IMR-90 (cell line): ENCODE measurements at regions of chr20 and their contacts with region 1.

Region 1: DNA sequence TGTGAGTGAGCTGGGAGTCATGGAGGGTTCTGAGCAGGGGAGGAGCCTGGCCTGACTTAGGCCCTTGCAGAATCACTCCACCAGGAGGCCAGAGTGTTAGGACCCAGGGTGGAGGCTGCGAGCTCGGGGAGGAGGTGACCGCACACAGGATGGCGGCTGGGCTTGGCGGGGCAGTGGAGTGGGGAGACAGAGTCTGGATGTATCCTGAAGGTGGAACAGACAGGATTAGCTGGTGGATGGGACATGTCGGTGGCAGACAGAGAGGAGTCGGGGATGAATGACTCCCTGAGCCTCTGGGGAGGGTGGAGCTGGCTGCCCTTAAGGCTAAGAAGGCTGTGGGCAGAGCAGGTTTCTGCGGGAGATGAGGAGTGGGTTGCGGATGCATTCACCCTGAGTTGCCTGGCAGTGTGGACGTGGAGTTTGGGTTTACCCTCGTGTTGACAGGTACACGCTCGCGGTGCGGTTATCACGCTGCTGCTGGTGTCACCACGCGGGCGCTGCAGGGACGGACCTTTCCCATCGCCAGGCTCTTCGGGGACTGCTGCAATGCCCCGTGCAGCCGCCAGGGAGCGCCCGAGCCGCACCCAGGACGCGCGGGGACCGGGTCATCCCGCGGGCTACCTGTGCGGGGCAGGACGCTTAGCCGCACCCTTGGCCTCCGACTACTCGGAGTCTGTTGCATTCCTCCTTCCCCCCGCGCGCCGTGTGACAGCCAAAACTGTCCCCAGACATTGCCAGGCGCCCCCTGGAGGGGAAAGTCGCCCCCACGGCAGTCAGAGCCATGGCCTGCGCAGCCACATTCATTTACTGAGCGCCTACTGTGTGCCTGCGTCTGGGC is 43.0 kb upstream of the PTGIS start:
- DNase-seq: no peak
- ATAC-seq: peak; percentile 92
- H3K4me3 ChIP-seq: no peak overlapping the region
- H3K27ac ChIP-seq: no peak overlapping the region
- H3K4me1 ChIP-seq: peaks cover 4% of the 10 kb centered on the region; the same call in 1 of the 2 replicates
- H3K27me3 ChIP-seq: peaks cover 6% of the 10 kb centered on the region; the same call in 1 of the 2 replicates
- CTCF ChIP-seq: peak; percentile 98
- POLR2A ChIP-seq: 0 out of 2 replicates have a peak, but pooled peaks have one; percentile 21
- RAD21 ChIP-seq: peak; percentile 95

Region 2: GRCh38 chr20:49330544-49331239 is 280.2 kb before region 1 on chr20:
- CTCF ChIA-PET with region 1: no interaction called
- POLR2A ChIA-PET with region 1: no interaction called
- dilution Hi-C with region 1: no loop called
- in situ Hi-C with region 1: loop called (anchors 5 kb)
- intact Hi-C with region 1: loop called (anchors 1 kb)
- DNase-seq: no peak
- ATAC-seq: no peak
- H3K4me3 ChIP-seq: no peak overlapping the region
- H3K27ac ChIP-seq: no peak overlapping the region
- H3K4me1 ChIP-seq: peaks cover 2% of the 10 kb centered on the region; the same call in 1 of the 2 replicates
- H3K27me3 ChIP-seq: peaks cover 52% of the 10 kb centered on the region
- CTCF ChIP-seq: no peak
- POLR2A ChIP-seq: no peak
- RAD21 ChIP-seq: no peak

Region 3: GRCh38 chr20:49541733-49542513 is 69.0 kb before region 1 on chr20:
- CTCF ChIA-PET with region 1: interaction called, 24 read pairs
- POLR2A ChIA-PET with region 1: no interaction called
- dilution Hi-C with region 1: no loop called
- in situ Hi-C with region 1: loop called (anchors 5 kb)
- intact Hi-C with region 1: loop called (anchors 1 kb)
- DNase-seq: peak; percentile 63
- ATAC-seq: peak; percentile 93
- H3K4me3 ChIP-seq: no peak overlapping the region
- H3K27ac ChIP-seq: no peak overlapping the region
- H3K4me1 ChIP-seq: no peaks in the 10 kb centered on the region
- H3K27me3 ChIP-seq: peaks cover 4% of the 10 kb centered on the region; the same call in 1 of the 2 replicates
- CTCF ChIP-seq: peak; percentile 94
- POLR2A ChIP-seq: no peak
- RAD21 ChIP-seq: peak; percentile 90

Region 4: DNA sequence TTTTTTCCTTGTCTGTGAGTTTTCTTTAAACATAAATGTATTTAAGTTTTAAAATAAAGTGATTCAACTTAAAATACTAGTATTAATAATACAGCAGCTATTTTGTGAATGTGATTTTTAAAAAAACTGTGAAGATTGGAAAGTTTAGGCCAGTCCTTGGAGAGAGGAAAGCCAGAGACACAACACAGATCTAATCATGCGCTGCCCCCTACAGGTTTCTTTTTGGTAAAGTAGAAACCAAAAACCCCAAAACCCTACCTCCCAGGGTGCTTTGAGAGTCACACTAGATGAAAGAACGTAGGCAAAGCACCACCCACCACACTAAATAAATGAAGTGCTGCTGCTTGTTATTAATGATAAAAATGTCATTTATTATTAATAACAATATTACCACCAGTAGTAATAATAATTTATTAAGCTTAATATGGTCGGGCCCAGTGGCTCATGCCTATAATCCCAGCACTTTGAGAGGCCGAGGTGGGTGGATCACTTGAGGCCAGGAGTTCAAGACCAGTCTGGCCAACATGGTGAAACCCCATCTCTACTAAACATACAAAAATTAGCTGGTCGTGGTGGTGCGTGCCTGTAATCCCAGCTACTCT is 235.4 kb after region 1 on chr20:
- CTCF ChIA-PET with region 1: interaction called, 10 read pairs
- POLR2A ChIA-PET with region 1: no interaction called
- dilution Hi-C with region 1: no loop called
- in situ Hi-C with region 1: loop called (anchors 5 kb)
- intact Hi-C with region 1: loop called (anchors 1 kb)
- DNase-seq: peak; percentile 58
- ATAC-seq: peak; percentile 89
- H3K4me3 ChIP-seq: no peak overlapping the region
- H3K27ac ChIP-seq: no peak overlapping the region
- H3K4me1 ChIP-seq: peaks cover 2% of the 10 kb centered on the region; the same call in 1 of the 2 replicates
- H3K27me3 ChIP-seq: no peaks in the 10 kb centered on the region
- CTCF ChIP-seq: peak; percentile 69
- POLR2A ChIP-seq: no peak
- RAD21 ChIP-seq: peak; percentile 75

Region 5: GRCh38 chr20:49928401-49929141 is 317.7 kb after region 1 on chr20:
- CTCF ChIA-PET with region 1: no interaction called
- POLR2A ChIA-PET with region 1: no interaction called
- dilution Hi-C with region 1: no loop called
- in situ Hi-C with region 1: no loop called
- intact Hi-C with region 1: loop called (anchors 1 kb)
- DNase-seq: peak; percentile 89
- ATAC-seq: peak; percentile 98
- H3K4me3 ChIP-seq: peak overlapping the region; percentile 16; the same call in 1 of the 2 replicates
- H3K27ac ChIP-seq: 0 out of 2 replicates have a peak overlapping the region, but pooled peaks have one; percentile 4
- H3K4me1 ChIP-seq: no peaks in the 10 kb centered on the region
- H3K27me3 ChIP-seq: no peaks in the 10 kb centered on the region
- CTCF ChIP-seq: peak; percentile 93
- POLR2A ChIP-seq: no peak
- RAD21 ChIP-seq: peak; percentile 72

Region 6: GRCh38 chr20:50085452-50086365 is 474.8 kb after region 1 on chr20:
- CTCF ChIA-PET with region 1: no interaction called
- POLR2A ChIA-PET with region 1: no interaction called
- dilution Hi-C with region 1: no loop called
- in situ Hi-C with region 1: loop called (anchors 25 kb)
- intact Hi-C with region 1: no loop called
- DNase-seq: peak; percentile 73
- ATAC-seq: peak; percentile 89
- H3K4me3 ChIP-seq: no peak overlapping the region
- H3K27ac ChIP-seq: peak overlapping the region; percentile 8; the same call in 1 of the 2 replicates
- H3K4me1 ChIP-seq: peaks cover 17% of the 10 kb centered on the region
- H3K27me3 ChIP-seq: no peaks in the 10 kb centered on the region
- CTCF ChIP-seq: peak; percentile 84
- POLR2A ChIP-seq: no peak
- RAD21 ChIP-seq: peak; percentile 78